ENCODE measurements at regions of chr5 and their contacts with region 1.

Region 1: DNA sequence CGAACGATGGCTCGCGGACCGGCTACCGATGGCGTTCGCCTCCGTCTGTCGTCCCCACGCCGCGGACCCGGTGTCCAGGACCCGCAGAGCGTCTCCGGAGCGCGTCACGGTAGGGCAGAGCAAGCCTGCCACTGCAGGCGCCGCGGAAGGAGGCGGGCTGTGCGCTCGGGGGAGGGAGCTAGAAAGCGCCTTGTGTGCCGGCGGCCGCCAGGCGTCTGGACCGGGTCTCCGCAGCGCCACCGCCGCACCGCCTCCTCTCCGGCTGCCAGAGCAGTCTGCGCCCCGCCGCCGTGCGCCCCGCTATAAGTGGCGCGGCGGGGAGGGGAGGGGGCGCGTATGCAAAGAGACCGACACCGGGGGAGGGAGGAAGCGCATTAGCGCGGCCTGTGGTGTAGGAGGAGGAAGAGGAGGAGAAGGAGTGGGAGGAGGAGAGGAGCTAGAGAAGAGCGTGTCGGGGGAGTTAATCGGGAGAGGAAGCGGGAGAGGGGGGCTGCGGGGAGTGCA is at the start of gene ENC1:
- DNase-seq: peak; percentile 92
- ATAC-seq: peak; percentile 89
- total RNA-seq, gene ENC1: 5.5 to 12.0 TPM

Region 2: GRCh38 chr5:73591102-73591695 is 1049.3 kb before region 1 on chr5:
- intact Hi-C with region 1: loop called in 1 of 2 experiments (anchors 10 kb)
- DNase-seq: no peak
- ATAC-seq: peak; percentile 63 to 76

Region 3: DNA sequence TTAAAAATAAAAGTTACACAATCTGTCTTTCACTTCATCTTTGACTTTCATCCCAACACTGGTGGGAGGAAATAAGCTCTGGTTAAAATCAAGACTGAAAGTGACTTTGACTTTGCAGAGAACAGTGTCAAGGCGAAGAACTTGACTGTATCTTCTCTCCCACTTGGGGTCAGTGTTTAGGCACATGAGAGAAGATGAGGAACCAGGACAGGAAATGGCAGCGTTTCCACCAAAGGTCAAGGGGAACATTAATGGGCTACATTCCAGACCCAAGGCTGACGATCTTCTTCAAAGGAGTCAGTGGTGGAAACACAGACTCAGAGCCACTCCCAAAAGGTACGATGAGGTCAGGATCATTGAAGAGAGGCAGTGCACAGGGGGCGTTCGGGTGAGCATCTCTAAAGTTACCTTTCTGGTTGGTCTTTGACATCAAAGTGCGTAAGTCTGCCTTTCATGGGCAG is 605.0 kb before region 1 on chr5:
- intact Hi-C with region 1: loop called (anchors 5 to 10 kb)
- DNase-seq: peak; percentile 28
- ATAC-seq: peak; percentile 73 to 90

Region 4: GRCh38 chr5:74296685-74297408 is 343.7 kb before region 1 on chr5:
- intact Hi-C with region 1: loop called in 1 of 2 experiments (anchors 5 kb)
- DNase-seq: peak; percentile 43
- ATAC-seq: peak; percentile 12 to 61

Region 5: GRCh38 chr5:74367241-74367733 is 273.2 kb before region 1 on chr5:
- intact Hi-C with region 1: loop called in 1 of 2 experiments (anchors 10 kb)
- DNase-seq: no peak
- ATAC-seq: peak; percentile 57 to 84

Region 6: DNA sequence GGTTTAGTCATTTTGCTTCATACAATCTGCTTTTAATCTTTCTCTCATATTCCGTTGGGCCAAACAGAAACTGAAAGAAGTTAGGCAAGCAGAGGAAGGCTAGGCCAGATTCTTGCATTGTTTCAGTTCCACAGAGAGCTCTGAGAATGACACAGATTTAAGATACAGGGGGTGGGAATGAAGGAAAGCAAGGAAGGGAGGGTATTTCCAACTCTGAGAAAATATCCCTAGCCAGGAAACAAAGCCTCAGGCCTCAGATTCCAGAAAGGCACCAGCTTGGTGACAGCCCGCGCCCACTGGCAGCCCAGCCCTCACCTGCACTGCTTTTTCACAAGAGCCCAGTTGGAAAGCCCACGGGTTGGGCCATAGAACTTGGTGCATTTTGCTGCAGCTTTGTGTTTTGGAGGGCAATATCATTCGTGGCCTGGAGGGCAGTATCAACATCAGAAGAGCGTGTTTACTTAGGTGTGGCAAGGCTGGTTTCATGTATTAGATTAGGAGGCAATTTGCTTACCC is 63.5 kb before region 1 on chr5:
- intact Hi-C with region 1: loop called in 1 of 2 experiments (anchors 5 kb)
- DNase-seq: no peak
- ATAC-seq: peak; percentile 83 to 86

Measured in left cardiac atrium (tissue), 4 donors.